Activated naive CD4-positive, alpha-beta T cell treated with anti-CD3 and anti-CD28 coated beads, Interleukin-2, amount 10 ng/mL, durations not matched to agents 7 days and 5 days (primary cell): ENCODE measurements at regions of chr14 and their contacts with region 1.

Region 1: DNA sequence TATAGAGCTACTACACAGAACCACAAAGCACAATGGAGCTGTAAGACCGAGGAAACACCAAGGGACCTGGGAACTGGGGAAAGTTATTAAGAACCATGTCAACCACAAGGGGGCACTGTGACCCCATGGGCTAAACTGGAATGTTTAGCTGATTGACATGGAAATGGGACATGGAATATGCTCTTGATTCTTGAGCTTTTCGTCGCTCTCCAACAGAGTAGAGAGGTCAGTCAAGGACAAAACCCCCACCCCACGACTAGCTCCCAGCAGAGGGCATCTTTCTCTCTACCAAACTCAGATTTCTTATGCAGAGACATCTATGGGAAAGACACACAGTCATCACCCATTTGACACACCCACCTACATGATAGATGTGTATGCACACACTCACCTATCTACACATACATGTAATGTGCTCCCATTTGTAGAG is 10.1 kb downstream of the NDRG2 start:
- DNase-seq: peak; percentile 86
- H3K4me3 Mint-ChIP-seq: no peak overlapping the region
- H3K27ac Mint-ChIP-seq: no peak overlapping the region
- H3K4me1 Mint-ChIP-seq: no peaks in the 10 kb centered on the region
- H3K27me3 Mint-ChIP-seq: peaks cover 37% of the 10 kb centered on the region

Region 2: GRCh38 chr14:20836668-20837338 is 178.0 kb before region 1 on chr14:
- CTCF ChIA-PET with region 1: no interaction called
- DNase-seq: no peak
- H3K4me3 Mint-ChIP-seq: no peak overlapping the region
- H3K27ac Mint-ChIP-seq: no peak overlapping the region
- H3K4me1 Mint-ChIP-seq: no peaks in the 10 kb centered on the region
- H3K27me3 Mint-ChIP-seq: no peaks in the 10 kb centered on the region

Region 3: DNA sequence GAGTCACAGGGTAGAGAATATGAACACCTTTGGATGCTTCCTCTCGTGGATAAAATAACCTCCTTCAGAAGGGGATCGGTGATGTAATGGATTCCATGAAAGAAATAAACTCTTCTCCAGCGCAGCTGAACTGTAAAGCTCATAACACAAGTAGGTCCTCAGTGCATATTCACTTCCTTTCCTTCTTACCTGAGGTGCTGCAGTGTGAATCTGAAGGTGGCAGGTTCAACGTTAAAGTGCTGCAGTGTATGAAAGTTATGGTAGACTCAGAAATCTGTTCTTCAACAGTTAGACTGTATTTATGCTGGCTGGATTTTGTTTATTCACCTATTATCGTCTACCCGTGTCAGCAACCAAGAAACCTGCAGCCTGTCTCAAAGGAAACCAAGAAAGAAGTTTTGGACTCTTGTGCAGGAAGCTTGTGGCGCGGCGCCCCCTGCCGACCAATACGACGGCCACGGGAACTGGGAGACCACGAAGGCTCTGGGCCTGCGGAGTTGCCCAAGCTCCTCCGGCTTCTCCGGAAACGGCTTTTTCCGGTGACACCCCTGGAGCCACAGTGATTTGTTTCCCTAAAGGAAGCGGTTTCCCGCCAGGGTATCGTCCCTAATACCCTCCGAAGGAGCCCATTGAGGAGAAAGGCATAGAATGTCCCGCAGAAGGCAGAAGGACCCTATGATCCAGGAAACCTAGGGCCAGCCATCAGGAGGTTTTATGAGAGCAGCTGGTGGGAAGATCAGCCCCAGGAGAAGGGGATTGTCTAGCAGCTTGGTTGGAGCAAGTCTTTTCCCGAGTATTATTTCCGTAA is 141.2 kb before region 1 on chr14:
- CTCF ChIA-PET with region 1: no interaction called
- DNase-seq: peak; percentile 86
- H3K4me3 Mint-ChIP-seq: no peak overlapping the region
- H3K27ac Mint-ChIP-seq: no peak overlapping the region
- H3K4me1 Mint-ChIP-seq: peaks cover 16% of the 10 kb centered on the region
- H3K27me3 Mint-ChIP-seq: peaks cover 42% of the 10 kb centered on the region

Region 4: GRCh38 chr14:20998664-20999366 is 16.0 kb before region 1 on chr14 and contains the start of gene SLC39A2:
- CTCF ChIA-PET with region 1: interaction called, 107 read pairs
- DNase-seq: no peak
- H3K4me3 Mint-ChIP-seq: no peak within 1 kb of the TSS
- H3K27ac Mint-ChIP-seq: peak within 1 kb of the TSS; percentile 50
- H3K4me1 Mint-ChIP-seq: peaks cover 28% of the 10 kb centered on the region
- H3K27me3 Mint-ChIP-seq: peaks cover 1% of the 10 kb centered on the region

Region 5: GRCh38 chr14:21047378-21047781 is 32.6 kb after region 1 on chr14:
- CTCF ChIA-PET with region 1: interaction called, 174 read pairs
- DNase-seq: no peak
- H3K4me3 Mint-ChIP-seq: no peak overlapping the region
- H3K27ac Mint-ChIP-seq: no peak overlapping the region
- H3K4me1 Mint-ChIP-seq: peaks cover 2% of the 10 kb centered on the region
- H3K27me3 Mint-ChIP-seq: peaks cover 45% of the 10 kb centered on the region

Region 6: GRCh38 chr14:21071225-21072030 is 56.7 kb after region 1 on chr14:
- CTCF ChIA-PET with region 1: interaction called, 20 read pairs
- DNase-seq: peak; percentile 62
- H3K4me3 Mint-ChIP-seq: peak overlapping the region; percentile 42
- H3K27ac Mint-ChIP-seq: no peak overlapping the region
- H3K4me1 Mint-ChIP-seq: peaks cover 34% of the 10 kb centered on the region
- H3K27me3 Mint-ChIP-seq: peaks cover 93% of the 10 kb centered on the region

Region 7: GRCh38 chr14:21103710-21104447 is 89.1 kb after region 1 on chr14:
- CTCF ChIA-PET with region 1: interaction called, 208 read pairs
- DNase-seq: peak; percentile 97
- H3K4me3 Mint-ChIP-seq: peak overlapping the region; percentile 90
- H3K27ac Mint-ChIP-seq: peak overlapping the region; percentile 81
- H3K4me1 Mint-ChIP-seq: peaks cover 39% of the 10 kb centered on the region
- H3K27me3 Mint-ChIP-seq: peaks cover 32% of the 10 kb centered on the region